Ovary (tissue), 10 donors: ENCODE measurements at regions of chr19 and their contacts with region 1.

Region 1: DNA sequence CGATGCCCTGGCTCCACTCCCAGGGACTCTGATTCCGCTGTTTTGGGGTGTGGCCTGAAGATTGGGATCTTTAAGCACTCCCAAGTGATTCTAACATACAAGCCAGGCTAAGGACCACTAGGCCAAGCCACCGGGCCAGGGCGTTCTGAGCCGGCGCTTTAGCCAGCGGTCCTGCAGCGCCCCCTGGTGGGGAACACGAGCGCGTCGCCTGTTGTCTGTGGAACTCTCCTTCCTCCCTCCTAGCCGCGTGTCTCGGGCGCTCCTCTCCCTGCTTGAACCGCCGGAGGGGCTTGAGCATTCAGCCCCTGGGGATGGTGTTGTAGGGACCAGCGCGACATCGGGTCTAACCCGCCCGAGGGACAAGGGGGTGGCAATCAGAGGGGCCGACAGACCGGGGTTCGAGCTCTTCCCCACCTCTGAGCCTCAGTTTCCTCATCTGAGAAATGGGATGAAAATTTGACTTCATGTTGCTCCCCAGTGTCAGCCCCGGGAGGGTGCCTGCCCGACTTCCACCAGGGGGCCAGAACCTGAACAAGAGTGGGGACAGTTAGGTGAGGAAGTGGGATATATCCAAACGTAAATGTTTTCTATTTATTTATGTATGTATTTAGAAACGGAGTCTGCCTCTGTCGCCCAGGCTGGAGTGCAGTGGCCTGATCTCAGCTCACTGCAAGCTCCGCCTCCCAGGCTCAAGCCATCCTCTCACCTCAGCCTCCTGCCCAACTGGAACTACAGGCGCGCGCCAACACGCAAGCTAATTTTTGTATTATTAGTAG is 18.0 kb upstream of the PNMA8B start:
- DNase-seq: peak; percentile 75 to 90 (median 89)
- H3K4me3 ChIP-seq: no peak overlapping the region
- H3K27ac ChIP-seq: no peak overlapping the region
- H3K4me1 ChIP-seq: peaks cover 2% of the 10 kb centered on the region
- H3K27me3 ChIP-seq: no peaks in the 10 kb centered on the region
- CTCF ChIP-seq: peak; percentile 95 to 97 (median 96)
- EP300 ChIP-seq: no peak
- POLR2A ChIP-seq: no peak

Region 2: DNA sequence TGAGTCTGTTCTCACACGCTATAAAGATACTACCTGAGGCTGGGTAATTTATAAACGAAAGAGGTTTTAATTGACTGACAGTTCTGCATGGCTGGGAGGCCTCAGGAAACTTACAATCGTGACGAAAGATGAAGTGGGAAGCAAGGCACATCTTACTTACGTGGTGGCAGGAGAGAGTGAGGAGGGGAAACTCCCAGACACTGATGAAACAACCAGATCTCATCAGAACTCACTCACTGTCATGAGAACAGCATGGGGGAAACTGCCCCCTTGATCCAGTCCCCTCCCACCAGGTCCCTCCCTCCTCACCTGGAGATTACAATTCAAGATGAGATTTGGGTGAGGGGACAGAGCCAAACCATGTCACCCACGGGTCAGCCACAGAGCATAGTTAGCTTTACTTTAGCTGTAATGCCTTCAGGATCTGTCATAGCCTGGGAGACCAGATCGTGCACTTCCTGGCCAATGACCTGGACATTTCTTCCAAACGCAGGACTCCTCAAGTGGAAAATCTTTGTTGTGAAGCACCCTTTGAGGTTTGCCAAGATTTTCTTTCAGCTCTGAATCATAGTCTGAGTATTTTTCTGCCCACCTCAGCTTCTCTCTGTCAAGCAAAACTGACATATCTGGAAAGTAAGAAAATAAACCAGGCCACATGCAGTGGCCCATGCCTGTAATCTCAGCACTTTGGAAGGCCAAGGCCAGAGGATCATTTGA is 242.0 kb before region 1 on chr19:
- intact Hi-C with region 1: loop called in 1 of 4 experiments (anchors 10 kb)
- DNase-seq: no peak
- H3K4me3 ChIP-seq: no peak overlapping the region
- H3K27ac ChIP-seq: no peak overlapping the region
- H3K4me1 ChIP-seq: no peaks in the 10 kb centered on the region
- H3K27me3 ChIP-seq: no peaks in the 10 kb centered on the region
- CTCF ChIP-seq: no peak
- EP300 ChIP-seq: no peak
- POLR2A ChIP-seq: no peak

Region 3: GRCh38 chr19:46283771-46284170 is 229.9 kb before region 1 on chr19:
- intact Hi-C with region 1: loop called in 3 of 4 experiments (anchors 2 to 10 kb)
- DNase-seq: no peak
- H3K4me3 ChIP-seq: no peak overlapping the region
- H3K27ac ChIP-seq: no peak overlapping the region
- H3K4me1 ChIP-seq: no peaks in the 10 kb centered on the region
- H3K27me3 ChIP-seq: no peaks in the 10 kb centered on the region
- CTCF ChIP-seq: no peak
- EP300 ChIP-seq: no peak
- POLR2A ChIP-seq: no peak

Region 4: GRCh38 chr19:46564701-46565100 is 51.1 kb after region 1 on chr19:
- intact Hi-C with region 1: no loop called
- DNase-seq: no peak
- H3K4me3 ChIP-seq: no peak overlapping the region
- H3K27ac ChIP-seq: no peak overlapping the region
- H3K4me1 ChIP-seq: no peaks in the 10 kb centered on the region
- H3K27me3 ChIP-seq: no peaks in the 10 kb centered on the region
- CTCF ChIP-seq: no peak
- EP300 ChIP-seq: no peak
- POLR2A ChIP-seq: no peak